MCF 10A (cell line): ENCODE measurements at regions of chr19 and their contacts with region 1.

Region 1: DNA sequence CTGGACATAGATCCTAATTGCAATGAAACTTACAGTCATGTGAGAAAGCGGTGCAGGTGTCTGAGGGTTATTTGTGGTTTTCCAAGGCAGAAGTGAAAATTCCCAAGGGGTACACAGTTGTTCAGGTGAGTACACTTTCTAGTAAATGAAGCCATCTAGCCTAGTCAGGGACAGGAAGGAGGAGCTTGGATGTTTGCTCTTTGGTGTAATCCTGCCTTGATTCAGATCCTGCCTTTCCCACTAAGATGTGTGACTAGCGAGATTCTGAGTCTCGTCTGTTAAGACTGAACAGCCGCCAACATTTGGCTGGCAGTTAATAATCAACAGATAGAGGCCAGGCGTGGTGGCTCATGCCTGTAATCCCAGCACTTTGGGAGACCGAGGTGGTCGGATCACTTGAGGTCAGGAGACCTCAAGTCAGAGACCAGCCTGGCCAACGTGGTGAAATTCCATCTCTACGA is 2.5 kb downstream of the RPS9 start:
- DNase-seq: peak; percentile 35
- H3K4me3 Mint-ChIP-seq: peak overlapping the region; percentile 91
- H3K27ac Mint-ChIP-seq: no peak overlapping the region
- H3K4me1 Mint-ChIP-seq: peaks cover 17% of the 10 kb centered on the region
- H3K27me3 Mint-ChIP-seq: no peaks in the 10 kb centered on the region
- CTCF ChIP-seq: no peak

Region 2: GRCh38 chr19:53867225-53868090 is 335.7 kb before region 1 on chr19 and contains the start of gene MYADM:
- CTCF ChIA-PET with region 1: no interaction called
- POLR2A ChIA-PET with region 1: interaction called, 3 read pairs
- intact Hi-C with region 1: loop called (anchors 5 kb)
- DNase-seq: peak; percentile 97
- H3K4me3 Mint-ChIP-seq: peak within 1 kb of the TSS; percentile 97
- H3K27ac Mint-ChIP-seq: peak within 1 kb of the TSS; percentile 100
- H3K4me1 Mint-ChIP-seq: peaks cover 20% of the 10 kb centered on the region
- H3K27me3 Mint-ChIP-seq: no peaks in the 10 kb centered on the region
- CTCF ChIP-seq: no peak
- total RNA-seq, gene MYADM: 39.0 and 43.3 TPM in 2 replicates

Region 3: GRCh38 chr19:54159352-54160181 is 43.6 kb before region 1 on chr19 and contains the start of gene LENG1:
- CTCF ChIA-PET with region 1: interaction called, 4 read pairs
- POLR2A ChIA-PET with region 1: interaction called, 27 read pairs
- intact Hi-C with region 1: loop called (anchors 5 kb)
- DNase-seq: peak; percentile 100
- H3K4me3 Mint-ChIP-seq: peak within 1 kb of the TSS; percentile 76
- H3K27ac Mint-ChIP-seq: peak within 1 kb of the TSS; percentile 85
- H3K4me1 Mint-ChIP-seq: peaks cover 22% of the 10 kb centered on the region
- H3K27me3 Mint-ChIP-seq: no peaks in the 10 kb centered on the region
- CTCF ChIP-seq: no peak
- total RNA-seq, gene LENG1: 6.1 and 8.2 TPM in 2 replicates

Region 4: GRCh38 chr19:54168174-54168917 is 34.8 kb before region 1 on chr19:
- CTCF ChIA-PET with region 1: interaction called, 7 read pairs
- POLR2A ChIA-PET with region 1: interaction called, 14 read pairs
- intact Hi-C with region 1: loop called (anchors 5 kb)
- DNase-seq: peak; percentile 86
- H3K4me3 Mint-ChIP-seq: no peak overlapping the region
- H3K27ac Mint-ChIP-seq: no peak overlapping the region
- H3K4me1 Mint-ChIP-seq: peaks cover 6% of the 10 kb centered on the region
- H3K27me3 Mint-ChIP-seq: no peaks in the 10 kb centered on the region
- CTCF ChIP-seq: peak; percentile 82

Region 5: DNA sequence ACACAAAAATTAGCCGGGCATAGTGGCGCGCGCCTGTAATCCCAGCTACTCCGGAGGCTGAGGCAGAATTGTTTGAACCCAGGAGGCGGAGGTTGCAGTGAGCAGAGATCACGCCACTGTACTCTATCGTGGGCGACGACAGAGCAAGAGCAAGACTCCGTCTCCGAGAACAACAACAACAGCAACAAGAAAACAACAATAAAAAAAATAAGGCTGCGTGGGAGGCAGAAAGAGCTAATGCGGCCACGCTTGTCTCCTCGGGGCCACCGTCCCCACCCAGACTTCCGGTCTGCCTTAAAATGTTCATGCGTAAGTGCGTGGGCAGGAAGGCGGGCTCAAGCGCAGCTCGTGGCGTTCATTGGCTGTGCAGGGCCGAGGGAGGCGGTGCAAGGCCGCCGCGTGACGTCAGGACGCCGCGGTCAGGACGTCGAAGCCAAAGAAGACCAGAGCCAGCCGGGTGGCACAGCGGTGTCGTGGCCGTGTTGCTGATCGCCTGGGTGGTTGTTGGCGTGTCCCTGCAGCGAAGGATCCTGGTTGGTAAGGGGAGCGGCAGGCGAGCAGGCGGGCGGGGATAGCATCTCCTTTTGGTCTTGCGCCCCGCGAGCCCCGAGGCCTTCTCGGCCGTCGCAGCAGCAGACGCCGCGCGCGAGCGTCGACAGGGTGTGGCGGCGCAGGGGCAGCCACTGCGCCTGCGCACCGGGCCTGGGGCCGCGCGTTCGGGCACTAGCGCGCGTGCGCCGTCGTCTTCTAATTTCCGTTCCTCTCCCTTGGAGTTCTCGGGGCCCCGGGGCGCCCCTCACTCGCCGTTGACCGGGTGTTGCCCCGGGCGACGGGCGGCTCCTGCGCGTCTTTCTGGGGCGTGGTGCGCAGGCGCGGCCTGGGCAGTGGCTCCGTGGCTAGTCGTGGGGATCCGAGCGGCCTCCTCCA is 245.9 kb after region 1 on chr19 and contains the start of gene LENG8:
- CTCF ChIA-PET with region 1: no interaction called
- POLR2A ChIA-PET with region 1: interaction called, 24 read pairs
- intact Hi-C with region 1: no loop called
- DNase-seq: peak; percentile 97
- H3K4me3 Mint-ChIP-seq: peak within 1 kb of the TSS; percentile 97
- H3K27ac Mint-ChIP-seq: peak within 1 kb of the TSS; percentile 99
- H3K4me1 Mint-ChIP-seq: peaks cover 28% of the 10 kb centered on the region
- H3K27me3 Mint-ChIP-seq: no peaks in the 10 kb centered on the region
- CTCF ChIP-seq: no peak
- total RNA-seq, gene LENG8: 238 and 249 TPM in 2 replicates